Activated CD4-positive, alpha-beta T cell treated with anti-CD3 and anti-CD28 coated beads for 36 hours (primary cell): ENCODE measurements at regions of chr2 and their contacts with region 1.

Region 1: GRCh38 chr2:219388127-219388844 is 574 bp upstream of the DNPEP start:
- DNase-seq: peak; percentile 100
- ATAC-seq: peak; percentile 81
- H3K4me3 Mint-ChIP-seq: peak overlapping the region; percentile 97
- H3K27ac Mint-ChIP-seq: peak overlapping the region; percentile 82
- H3K4me1 Mint-ChIP-seq: peaks cover 9% of the 10 kb centered on the region
- H3K27me3 Mint-ChIP-seq: no peaks in the 10 kb centered on the region

Region 2: DNA sequence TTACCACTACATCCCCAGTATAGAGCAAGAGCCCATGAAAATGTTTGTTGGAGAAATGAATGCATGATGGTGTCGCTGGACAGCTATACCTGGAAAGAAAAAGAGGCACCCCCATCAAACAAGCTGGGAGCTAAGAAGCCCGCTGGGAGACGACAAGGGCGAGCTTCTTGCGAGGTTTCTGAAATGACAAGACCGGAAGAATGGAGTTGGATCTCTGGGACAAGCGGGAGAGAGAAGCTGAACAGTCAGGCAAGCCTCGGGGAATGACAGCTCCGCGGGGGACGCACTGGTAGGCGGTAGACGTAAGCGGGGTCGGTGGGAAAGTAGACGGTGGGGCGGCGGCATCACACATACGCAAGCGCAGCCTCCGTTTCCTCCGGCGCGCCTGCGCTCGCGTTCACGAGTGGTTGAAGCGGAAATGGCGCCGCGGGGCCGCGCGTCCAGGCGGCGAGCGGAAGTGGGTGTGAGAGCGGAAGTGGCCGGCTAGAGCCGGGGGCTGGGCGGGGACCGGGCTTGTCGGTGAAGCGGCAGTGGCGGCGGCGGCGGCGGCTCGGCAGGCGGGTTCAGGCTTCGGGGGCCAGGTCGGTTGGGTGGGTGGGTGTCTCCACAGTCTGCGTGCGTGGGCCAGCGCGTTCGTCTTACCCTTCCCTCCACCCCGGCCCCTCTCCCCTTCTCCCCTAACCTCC is 1171.5 kb before region 1 on chr2 and contains the start of gene ARPC2:
- CTCF ChIA-PET with region 1: no interaction called
- POLR2A ChIA-PET with region 1: no interaction called
- intact Hi-C with region 1: loop called in 1 of 2 experiments (anchors 2 kb)
- DNase-seq: peak; percentile 96
- ATAC-seq: peak; percentile 64
- H3K4me3 Mint-ChIP-seq: peak within 1 kb of the TSS; percentile 81
- H3K27ac Mint-ChIP-seq: peak within 1 kb of the TSS; percentile 96
- H3K4me1 Mint-ChIP-seq: peaks cover 34% of the 10 kb centered on the region
- H3K27me3 Mint-ChIP-seq: no peaks in the 10 kb centered on the region
- total RNA-seq, gene ARPC2: 563 to 632 TPM

Region 3: DNA sequence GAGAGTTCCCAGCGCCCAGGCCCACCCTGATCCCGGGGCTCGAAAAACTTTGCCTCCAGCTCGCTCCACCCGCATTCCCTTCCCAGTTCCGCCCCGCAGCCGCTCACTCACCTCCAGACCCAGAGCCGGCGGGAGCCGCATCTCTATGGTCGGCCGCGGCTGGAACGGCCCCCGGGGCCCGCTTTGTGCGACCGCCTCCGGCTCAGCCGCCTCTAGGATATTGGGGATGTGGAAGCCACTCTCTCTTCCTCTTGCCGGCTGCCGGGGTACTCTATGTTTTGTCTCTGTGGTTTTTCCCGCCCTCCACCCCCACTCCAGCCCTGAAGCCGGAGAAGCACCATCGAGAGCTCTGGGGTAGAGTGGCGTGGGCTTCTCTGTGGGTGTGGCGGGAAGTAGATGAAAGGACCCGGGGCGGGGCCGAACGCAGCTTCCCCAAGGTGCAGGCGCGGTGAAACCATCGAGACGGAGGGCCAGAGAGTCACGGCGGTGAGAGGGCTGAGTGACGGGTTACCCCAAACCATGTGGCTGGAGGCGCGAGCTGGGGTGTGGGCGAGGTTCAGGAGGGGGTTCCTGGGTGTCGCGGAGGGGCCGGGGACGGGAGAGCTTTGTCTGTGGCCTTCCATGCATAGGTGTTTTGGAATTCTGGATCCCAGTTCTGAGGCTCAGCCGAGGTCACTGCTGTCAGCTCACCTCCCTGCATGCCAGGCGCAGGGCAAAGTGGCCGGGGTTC is 728.9 kb before region 1 on chr2 and contains the starts of genes BCS1L and ZNF142:
- CTCF ChIA-PET with region 1: no interaction called
- POLR2A ChIA-PET with region 1: no interaction called
- intact Hi-C with region 1: loop called in 1 of 2 experiments (anchors 5 kb)
- DNase-seq: peak; percentile 98
- ATAC-seq: peak; percentile 95
- H3K4me3 Mint-ChIP-seq: peak within 1 kb of the TSS; percentile 88
- H3K27ac Mint-ChIP-seq: peak within 1 kb of the TSS; percentile 89
- H3K4me1 Mint-ChIP-seq: peaks cover 35% of the 10 kb centered on the region
- H3K27me3 Mint-ChIP-seq: no peaks in the 10 kb centered on the region
- total RNA-seq, gene BCS1L: 74.3 to 92.3 TPM
- total RNA-seq, gene ZNF142: 31.5 to 42.4 TPM

Region 4: GRCh38 chr2:219177552-219178376 is 210.5 kb before region 1 on chr2 and contains the start of gene RETREG2:
- CTCF ChIA-PET with region 1: no interaction called
- POLR2A ChIA-PET with region 1: no interaction called
- intact Hi-C with region 1: loop called in 1 of 2 experiments (anchors 1 kb)
- DNase-seq: peak; percentile 90
- ATAC-seq: peak; percentile 60
- H3K4me3 Mint-ChIP-seq: peak within 1 kb of the TSS; percentile 86
- H3K27ac Mint-ChIP-seq: peak within 1 kb of the TSS; percentile 97
- H3K4me1 Mint-ChIP-seq: peaks cover 52% of the 10 kb centered on the region
- H3K27me3 Mint-ChIP-seq: no peaks in the 10 kb centered on the region
- total RNA-seq, gene RETREG2: 58.8 to 70.1 TPM

Region 5: GRCh38 chr2:219253753-219254590 is 134.3 kb before region 1 on chr2 and contains the start of gene TUBA4A:
- CTCF ChIA-PET with region 1: interaction called, 4 read pairs
- POLR2A ChIA-PET with region 1: interaction called, 3 read pairs
- intact Hi-C with region 1: loop called in 1 of 2 experiments (anchors 1 kb)
- DNase-seq: peak; percentile 94
- ATAC-seq: peak; percentile 63
- H3K4me3 Mint-ChIP-seq: peak within 1 kb of the TSS; percentile 89
- H3K27ac Mint-ChIP-seq: peak within 1 kb of the TSS; percentile 93
- H3K4me1 Mint-ChIP-seq: peaks cover 54% of the 10 kb centered on the region
- H3K27me3 Mint-ChIP-seq: no peaks in the 10 kb centered on the region
- total RNA-seq, gene TUBA4A: 210 to 369 TPM

Region 6: GRCh38 chr2:219498280-219499057 is 110.2 kb after region 1 on chr2 and contains the start of gene GMPPA:
- CTCF ChIA-PET with region 1: interaction called, 5 read pairs
- POLR2A ChIA-PET with region 1: no interaction called
- intact Hi-C with region 1: loop called (anchors 1 kb)
- DNase-seq: peak; percentile 96
- ATAC-seq: peak; percentile 97
- H3K4me3 Mint-ChIP-seq: peak within 1 kb of the TSS; percentile 86
- H3K27ac Mint-ChIP-seq: peak within 1 kb of the TSS; percentile 72
- H3K4me1 Mint-ChIP-seq: peaks cover 38% of the 10 kb centered on the region
- H3K27me3 Mint-ChIP-seq: peaks cover 38% of the 10 kb centered on the region
- total RNA-seq, gene GMPPA: 35.2 to 35.5 TPM

Region 7: DNA sequence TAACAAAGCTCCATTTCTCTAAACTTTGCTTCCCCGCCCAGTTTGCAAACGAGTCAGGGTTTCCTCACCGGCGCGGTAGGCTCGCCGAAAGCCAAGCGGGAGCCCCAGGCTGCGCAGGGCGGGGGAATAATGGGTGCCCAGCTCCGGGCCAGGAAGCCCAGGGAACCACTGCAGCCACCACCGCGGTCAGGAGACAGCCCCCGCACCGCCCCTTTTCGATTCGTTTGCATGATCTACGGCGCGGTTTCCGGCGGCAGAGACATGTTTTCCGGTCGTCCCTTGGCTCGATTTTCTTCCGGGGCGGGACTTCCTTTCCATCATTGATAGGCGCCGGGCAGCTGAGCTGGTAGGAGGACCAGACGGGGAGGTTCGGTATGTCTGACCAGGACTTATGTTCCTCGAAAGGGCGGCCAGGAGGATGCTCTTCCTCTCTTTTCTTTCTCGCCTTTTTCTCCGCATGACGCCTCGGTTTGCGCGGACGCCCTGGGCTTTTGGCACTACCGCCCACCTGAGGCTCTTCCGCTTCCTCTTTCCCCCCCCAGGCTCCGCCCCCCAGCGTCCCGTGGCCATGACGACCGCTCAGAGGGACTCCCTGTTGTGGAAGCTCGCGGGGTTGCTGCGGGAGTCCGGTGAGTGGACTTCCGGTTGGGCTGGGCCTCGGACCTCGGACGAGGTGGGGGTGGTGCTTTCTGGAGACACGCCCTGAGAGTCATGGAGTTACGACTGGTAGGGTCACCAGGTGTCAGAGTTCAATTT is 209.4 kb after region 1 on chr2 and contains the start of gene STK11IP:
- CTCF ChIA-PET with region 1: no interaction called
- POLR2A ChIA-PET with region 1: no interaction called
- intact Hi-C with region 1: loop called (anchors 1 kb)
- DNase-seq: peak; percentile 95
- ATAC-seq: peak; percentile 91
- H3K4me3 Mint-ChIP-seq: peak within 1 kb of the TSS; percentile 82
- H3K27ac Mint-ChIP-seq: peak within 1 kb of the TSS; percentile 97
- H3K4me1 Mint-ChIP-seq: peaks cover 16% of the 10 kb centered on the region
- H3K27me3 Mint-ChIP-seq: peaks cover 4% of the 10 kb centered on the region
- total RNA-seq, gene STK11IP: 23.5 to 26.1 TPM